K562 (cell line): ENCODE measurements at regions of chr5 and their contacts with region 1.

Region 1: GRCh38 chr5:1670351-1670750 is 129.3 kb downstream of the MRPL36 start:
- DNase-seq: no peak
- ATAC-seq: no peak
- H3K4me3 ChIP-seq: no peak overlapping the region
- H3K27ac ChIP-seq: no peak overlapping the region
- H3K4me1 ChIP-seq: peaks cover 0 to 21% of the 10 kb centered on the region in 2 experiments; a peak in 3 of 5 replicates
- H3K27me3 ChIP-seq: peaks cover 35 to 62% of the 10 kb centered on the region in 2 experiments
- CTCF ChIP-seq: no peak
- EP300 ChIP-seq: no peak
- POLR2A ChIP-seq: no peak
- RAD21 ChIP-seq: no peak

Region 2: GRCh38 chr5:1724822-1725643 is 54.7 kb after region 1 on chr5:
- CTCF ChIA-PET with region 1: no interaction called
- POLR2A ChIA-PET with region 1: no interaction called
- in situ Hi-C with region 1: no loop called
- intact Hi-C with region 1: loop called (anchors 10 kb)
- DNase-seq: peak; percentile 62 to 77 (median 74)
- ATAC-seq: peak; percentile 88
- H3K4me3 ChIP-seq: no peak overlapping the region
- H3K27ac ChIP-seq: no peak overlapping the region
- H3K4me1 ChIP-seq: peaks cover 2 to 30% of the 10 kb centered on the region in 2 experiments; a peak in 3 of 5 replicates
- H3K27me3 ChIP-seq: peaks cover 50 to 69% of the 10 kb centered on the region in 2 experiments
- CTCF ChIP-seq: no peak
- EP300 ChIP-seq: no peak
- POLR2A ChIP-seq: no peak
- RAD21 ChIP-seq: no peak

Region 3: GRCh38 chr5:1736889-1737711 is 66.7 kb after region 1 on chr5:
- CTCF ChIA-PET with region 1: no interaction called
- POLR2A ChIA-PET with region 1: no interaction called
- in situ Hi-C with region 1: no loop called
- intact Hi-C with region 1: no loop called
- DNase-seq: no peak
- ATAC-seq: peak; percentile 37
- H3K4me3 ChIP-seq: no peak overlapping the region
- H3K27ac ChIP-seq: no peak overlapping the region
- H3K4me1 ChIP-seq: no peaks in the 10 kb centered on the region
- H3K27me3 ChIP-seq: peaks cover 2 to 24% of the 10 kb centered on the region in 2 experiments; a peak in 3 of 5 replicates
- CTCF ChIP-seq: no peak
- EP300 ChIP-seq: no peak
- POLR2A ChIP-seq: no peak
- RAD21 ChIP-seq: no peak

Region 4: DNA sequence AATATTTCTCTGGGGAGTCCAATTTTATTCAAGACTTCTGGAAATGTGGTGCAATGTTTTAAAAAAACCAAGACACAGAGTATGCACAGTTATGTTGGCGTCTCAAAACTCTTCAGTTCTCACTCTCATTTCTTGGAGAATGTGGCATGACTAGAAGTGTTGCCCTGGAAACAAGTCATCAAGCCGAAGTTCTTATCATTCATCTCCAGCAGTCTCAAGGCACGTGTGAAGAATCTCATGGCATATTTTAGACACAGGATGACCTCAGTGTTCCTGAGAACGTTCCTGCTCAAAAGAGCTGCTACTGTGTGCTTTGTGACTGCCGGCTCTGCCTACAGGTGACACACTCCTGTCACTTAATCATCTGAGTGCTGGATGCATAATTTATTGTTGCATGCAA is 359.8 kb after region 1 on chr5:
- CTCF ChIA-PET with region 1: no interaction called
- POLR2A ChIA-PET with region 1: no interaction called
- in situ Hi-C with region 1: no loop called
- intact Hi-C with region 1: loop called (anchors 5 kb)
- DNase-seq: no peak
- ATAC-seq: no peak
- H3K4me3 ChIP-seq: no peak overlapping the region
- H3K27ac ChIP-seq: no peak overlapping the region
- H3K4me1 ChIP-seq: no peaks in the 10 kb centered on the region
- H3K27me3 ChIP-seq: peaks cover 0 to 24% of the 10 kb centered on the region in 2 experiments; a peak in 3 of 5 replicates
- CTCF ChIP-seq: no peak
- EP300 ChIP-seq: no peak
- POLR2A ChIP-seq: no peak
- RAD21 ChIP-seq: no peak